H1 (cell line): ENCODE measurements at regions of chr12 and their contacts with region 1.

Region 1: DNA sequence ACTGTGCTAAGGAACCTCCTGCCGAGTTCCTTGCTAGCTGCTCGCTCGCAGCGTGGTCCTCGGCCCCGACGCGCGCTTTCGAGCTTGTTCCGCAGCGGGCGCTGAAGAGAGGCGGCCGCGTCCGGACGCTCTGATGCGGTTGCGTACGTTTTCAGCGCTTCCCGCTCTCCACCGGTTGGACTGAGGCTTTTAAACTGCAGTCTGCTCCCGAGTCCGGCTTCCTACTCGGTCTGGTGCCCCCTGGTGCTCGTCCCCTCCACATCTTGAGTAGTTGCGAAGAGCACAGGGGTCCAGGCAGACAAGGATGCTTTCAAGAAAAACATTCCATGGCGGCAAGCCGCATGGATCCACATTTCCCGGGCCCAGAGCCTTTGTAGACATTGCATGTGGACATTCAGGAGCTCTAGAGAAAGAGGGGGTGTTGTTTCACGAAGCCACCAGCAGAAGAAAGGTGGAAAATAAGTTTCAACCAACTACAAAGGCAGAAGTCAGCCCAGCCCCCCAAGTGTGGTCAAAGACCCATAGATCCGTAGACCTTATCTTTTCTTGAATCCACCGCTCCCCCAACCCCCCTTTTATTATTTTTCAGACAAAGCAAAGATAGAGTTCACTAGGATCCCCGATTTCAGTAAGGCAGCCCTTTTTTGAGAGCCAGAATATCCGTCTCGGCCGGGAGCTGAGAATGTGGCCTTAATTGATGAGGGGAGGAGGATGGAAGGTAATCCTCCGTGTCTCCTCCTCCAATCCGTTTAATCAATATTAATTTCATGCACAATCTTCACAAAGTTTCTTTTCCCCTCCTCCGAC is 984 bp upstream of the WNK1 start:
- DNase-seq: peak; percentile 89 to 94
- H3K4me3 ChIP-seq: peak overlapping the region; percentile 48 to 71 (median 55)
- H3K27ac ChIP-seq: peak overlapping the region; percentile 74
- H3K4me1 ChIP-seq: peaks cover 3 to 11% (median 4%) of the 10 kb centered on the region in 4 experiments; a peak in 6 of 7 replicates
- H3K27me3 ChIP-seq: no peaks in the 10 kb centered on the region
- CTCF ChIP-seq: peak; percentile 74 to 84 (median 77)
- EP300 ChIP-seq: no peak
- POLR2A ChIP-seq: peak; percentile 31 to 79
- RAD21 ChIP-seq: peak; percentile 69 to 78

Region 2: GRCh38 chr12:468671-469389 is 282.6 kb before region 1 on chr12:
- CTCF ChIA-PET with region 1: no interaction called
- POLR2A ChIA-PET with region 1: no interaction called
- DNase-seq: no peak
- H3K4me3 ChIP-seq: no peak overlapping the region
- H3K27ac ChIP-seq: no peak overlapping the region
- H3K4me1 ChIP-seq: peaks cover 0 to 5% (median 2%) of the 10 kb centered on the region in 4 experiments; a peak in 1 of 7 replicates
- H3K27me3 ChIP-seq: no peaks in the 10 kb centered on the region
- CTCF ChIP-seq: no peak
- EP300 ChIP-seq: no peak
- POLR2A ChIP-seq: no peak
- RAD21 ChIP-seq: no peak

Region 3: GRCh38 chr12:575948-576612 is 175.3 kb before region 1 on chr12:
- CTCF ChIA-PET with region 1: interaction called, 35 read pairs
- POLR2A ChIA-PET with region 1: interaction called, 7 read pairs
- DNase-seq: peak in 1 of 2 experiments; percentile 96
- H3K4me3 ChIP-seq: no peak overlapping the region; a peak in 1 of 8 replicates
- H3K27ac ChIP-seq: no peak overlapping the region
- H3K4me1 ChIP-seq: peaks cover 0 to 10% (median 3%) of the 10 kb centered on the region in 4 experiments; a peak in 6 of 7 replicates
- H3K27me3 ChIP-seq: peaks cover 0 to 9% (median 7%) of the 10 kb centered on the region in 4 experiments; a peak in 6 of 7 replicates
- CTCF ChIP-seq: peak; percentile 93 to 97 (median 94)
- EP300 ChIP-seq: no peak
- POLR2A ChIP-seq: peak in 1 of 2 experiments; percentile 43; a peak in 1 of 3 replicates
- RAD21 ChIP-seq: peak; percentile 82 to 89

Region 4: GRCh38 chr12:642633-643474 is 108.5 kb before region 1 on chr12:
- CTCF ChIA-PET with region 1: interaction called, 14 read pairs
- POLR2A ChIA-PET with region 1: interaction called, 18 read pairs
- DNase-seq: peak in 1 of 2 experiments; percentile 78
- H3K4me3 ChIP-seq: peak overlapping the region; percentile 42 to 63 (median 51)
- H3K27ac ChIP-seq: no peak overlapping the region; the same call in 1 of the 2 replicates
- H3K4me1 ChIP-seq: peaks cover 0 to 8% (median 3%) of the 10 kb centered on the region in 4 experiments; a peak in 4 of 7 replicates
- H3K27me3 ChIP-seq: no peaks in the 10 kb centered on the region; a peak in 5 of 7 replicates
- CTCF ChIP-seq: peak; percentile 38 to 72 (median 49)
- EP300 ChIP-seq: no peak
- POLR2A ChIP-seq: peak; percentile 51 to 71
- RAD21 ChIP-seq: peak; percentile 30 to 56; a peak in 3 of 4 replicates

Region 5: DNA sequence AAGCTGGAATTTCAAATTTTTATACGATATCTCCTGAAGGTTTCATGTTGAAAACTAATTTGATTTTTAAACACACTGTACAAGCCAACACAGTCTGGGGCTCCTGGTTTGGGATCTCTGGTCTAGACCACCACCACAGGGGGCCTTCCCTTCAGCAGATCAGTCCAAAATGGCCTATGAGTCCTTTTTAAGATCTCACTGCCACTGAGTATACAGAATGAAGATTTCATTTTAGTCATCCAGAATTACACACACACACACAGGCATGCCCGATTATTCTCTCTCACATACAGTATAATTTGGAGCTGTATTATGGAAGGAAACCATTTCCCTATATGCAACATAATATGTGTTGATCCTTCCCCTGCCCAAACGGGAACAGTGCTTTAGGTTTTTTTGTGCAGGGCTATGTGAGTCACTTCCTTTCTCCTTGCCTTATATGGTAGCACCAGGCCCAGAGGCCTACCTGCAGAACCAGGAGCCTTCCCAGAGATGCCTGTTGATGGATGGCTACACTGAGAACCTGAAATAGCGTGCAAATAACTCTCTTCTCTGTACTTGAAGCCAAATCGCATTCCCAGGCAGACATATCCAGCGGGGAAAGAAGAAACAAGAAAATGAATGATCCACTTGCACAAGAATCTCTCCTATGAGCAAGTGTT is 27.1 kb before region 1 on chr12:
- CTCF ChIA-PET with region 1: interaction called, 11 read pairs
- POLR2A ChIA-PET with region 1: interaction called, 20 read pairs
- DNase-seq: no peak
- H3K4me3 ChIP-seq: no peak overlapping the region
- H3K27ac ChIP-seq: no peak overlapping the region
- H3K4me1 ChIP-seq: peaks cover 0 to 5% (median 2%) of the 10 kb centered on the region in 4 experiments
- H3K27me3 ChIP-seq: no peaks in the 10 kb centered on the region
- CTCF ChIP-seq: no peak
- EP300 ChIP-seq: no peak
- POLR2A ChIP-seq: no peak
- RAD21 ChIP-seq: no peak

Region 6: GRCh38 chr12:810671-811415 is 59.4 kb after region 1 on chr12:
- CTCF ChIA-PET with region 1: interaction called, 16 read pairs
- POLR2A ChIA-PET with region 1: interaction called, 3 read pairs
- DNase-seq: no peak
- H3K4me3 ChIP-seq: no peak overlapping the region
- H3K27ac ChIP-seq: no peak overlapping the region
- H3K4me1 ChIP-seq: 0 out of 7 replicates have a peak, but pooled peaks cover 0 to 3% (median 0%) of the 10 kb centered on the region in 4 experiments
- H3K27me3 ChIP-seq: no peaks in the 10 kb centered on the region
- CTCF ChIP-seq: no peak
- EP300 ChIP-seq: no peak
- POLR2A ChIP-seq: no peak
- RAD21 ChIP-seq: no peak

Region 7: DNA sequence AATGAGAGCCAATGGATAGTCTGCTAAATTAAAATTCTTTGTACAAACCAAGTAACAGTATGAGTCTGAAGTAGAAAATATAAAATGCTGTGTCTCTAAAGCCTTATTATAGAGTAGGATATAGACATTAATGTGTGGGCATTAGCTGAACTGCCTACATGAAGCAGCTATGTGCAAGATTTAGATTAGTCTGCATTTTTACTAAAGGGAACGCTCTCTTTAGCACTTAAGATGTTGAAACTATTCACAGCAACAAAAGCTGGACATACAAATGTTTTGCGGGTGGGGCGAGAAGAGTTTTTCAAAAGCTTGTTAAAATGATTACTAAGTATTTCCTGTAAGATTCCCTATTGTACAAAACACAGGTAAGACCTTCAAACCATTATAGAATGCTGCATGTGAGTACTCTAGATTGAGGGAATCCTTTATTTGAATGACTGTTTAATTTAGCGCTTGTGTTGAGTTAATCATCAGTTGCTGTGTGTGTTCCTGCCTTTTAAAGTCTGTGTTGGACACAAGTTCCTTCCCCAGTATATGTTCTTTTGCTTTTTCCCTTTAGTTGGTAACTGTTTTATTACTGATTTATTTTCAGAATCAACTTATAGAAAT is 111.0 kb after region 1 on chr12:
- CTCF ChIA-PET with region 1: no interaction called
- POLR2A ChIA-PET with region 1: no interaction called
- DNase-seq: no peak
- H3K4me3 ChIP-seq: no peak overlapping the region
- H3K27ac ChIP-seq: no peak overlapping the region
- H3K4me1 ChIP-seq: no peaks in the 10 kb centered on the region
- H3K27me3 ChIP-seq: no peaks in the 10 kb centered on the region
- CTCF ChIP-seq: no peak
- EP300 ChIP-seq: no peak
- POLR2A ChIP-seq: no peak
- RAD21 ChIP-seq: no peak